AG04449 (cell line): ENCODE measurements at regions of chr19 and their contacts with region 1.

Region 1: DNA sequence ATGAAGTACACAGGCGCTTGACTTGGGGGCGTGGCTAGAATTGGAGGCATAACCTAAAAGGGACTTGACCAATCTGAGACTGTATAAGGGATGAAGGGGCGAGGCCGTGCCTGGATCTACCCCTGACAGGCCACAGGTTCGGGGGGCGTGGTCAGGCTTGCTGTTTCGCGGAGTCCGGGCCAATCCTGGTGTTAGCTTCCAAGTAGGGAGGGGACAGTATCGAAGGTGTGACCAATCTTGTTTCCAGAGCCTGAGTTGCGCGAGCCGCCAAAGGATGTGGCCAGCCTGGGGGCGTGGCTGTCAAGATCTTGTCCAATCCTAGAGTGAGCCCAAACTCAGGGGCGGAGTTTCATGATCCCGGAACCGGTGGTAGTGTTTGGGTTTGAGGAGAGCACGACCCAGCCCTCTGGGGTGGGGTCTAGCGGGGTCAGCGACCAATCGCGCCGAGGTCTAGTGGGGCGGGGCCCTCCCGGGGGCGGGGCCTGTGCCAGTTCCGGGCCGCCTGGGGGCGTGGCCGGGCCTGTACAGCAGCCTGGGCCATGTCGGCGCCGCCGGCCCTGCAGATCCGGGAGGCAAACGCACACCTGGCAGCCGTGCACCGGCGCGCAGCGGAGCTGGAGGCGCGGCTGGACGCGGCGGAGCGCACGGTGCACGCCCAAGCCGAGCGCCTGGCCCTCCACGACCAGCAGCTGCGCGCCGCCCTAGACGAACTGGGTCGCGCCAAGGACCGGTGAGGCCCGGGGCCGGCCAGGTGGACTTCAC is at the start of gene VMAC:
- DNase-seq: peak; percentile 100
- H3K4me3 ChIP-seq: peak within 1 kb of the TSS; percentile 100
- CTCF ChIP-seq: no peak

Region 2: GRCh38 chr19:5827891-5828660 is 76.5 kb before region 1 on chr19:
- CTCF ChIA-PET with region 1: no interaction called
- POLR2A ChIA-PET with region 1: interaction called, 23 read pairs
- DNase-seq: peak; percentile 17
- H3K4me3 ChIP-seq: peak overlapping the region; percentile 76
- CTCF ChIP-seq: no peak

Region 3: GRCh38 chr19:5891938-5892771 is 12.4 kb before region 1 on chr19:
- CTCF ChIA-PET with region 1: interaction called, 41 read pairs
- POLR2A ChIA-PET with region 1: interaction called, 5 read pairs
- DNase-seq: no peak
- H3K4me3 ChIP-seq: no peak overlapping the region
- CTCF ChIP-seq: peak; percentile 93